ENCODE measurements at regions of chr12 and their contacts with region 1.

Region 1: GRCh38 chr12:55829967-55830600 is 697 bp upstream of the DNAJC14 start:
- DNase-seq: no peak
- H3K4me3 Mint-ChIP-seq: peak overlapping the region; percentile 95
- H3K27ac Mint-ChIP-seq: peak overlapping the region; percentile 82
- H3K4me1 Mint-ChIP-seq: peaks cover 39% of the 10 kb centered on the region
- H3K27me3 Mint-ChIP-seq: no peaks in the 10 kb centered on the region

Region 2: DNA sequence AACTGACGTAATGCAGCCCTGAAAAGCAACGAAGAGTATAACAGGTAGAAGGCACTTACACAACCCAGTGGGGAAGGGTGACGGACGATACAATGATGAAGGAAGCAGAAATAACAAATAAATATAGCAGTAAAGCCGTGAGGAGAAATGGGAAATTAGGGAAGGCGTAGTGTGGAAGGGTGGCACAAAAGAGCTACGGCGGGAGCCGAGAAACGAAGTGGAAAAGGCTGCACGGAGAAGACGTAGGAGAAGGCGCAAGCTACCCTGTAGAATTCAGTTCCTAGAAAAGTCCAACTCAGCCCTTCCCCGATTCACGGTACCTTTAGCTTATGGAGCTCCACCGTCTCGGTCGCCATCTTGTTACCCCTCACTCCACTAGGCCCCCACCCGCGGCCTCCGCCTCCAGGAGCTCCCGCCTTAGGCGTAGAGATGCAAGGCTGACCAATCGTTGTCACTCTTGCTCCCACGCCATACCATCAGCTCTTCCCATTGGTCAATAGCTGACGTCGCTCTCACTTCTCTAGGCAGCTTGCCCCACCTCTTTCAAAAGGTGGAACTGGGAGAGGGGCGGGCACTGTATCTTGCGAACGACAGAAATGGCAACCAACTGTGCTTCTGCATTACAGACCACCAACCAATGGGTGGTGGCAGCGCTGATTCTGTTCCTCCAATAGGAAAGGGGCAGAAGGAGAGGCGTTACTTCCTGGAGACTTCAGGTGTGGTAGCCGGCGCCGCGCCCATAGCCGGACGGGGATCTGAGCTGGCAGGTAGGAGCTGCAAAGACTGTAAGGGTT is 12.5 kb before region 1 on chr12 and contains the starts of genes ORMDL2 and SARNP:
- CTCF ChIA-PET with region 1: interaction called, 14 read pairs
- POLR2A ChIA-PET with region 1: interaction called, 29 read pairs
- intact Hi-C with region 1: loop called (anchors 1 kb)
- DNase-seq: peak; percentile 99
- H3K4me3 Mint-ChIP-seq: no peak within 1 kb of the TSS
- H3K27ac Mint-ChIP-seq: no peak within 1 kb of the TSS
- H3K4me1 Mint-ChIP-seq: peaks cover 49% of the 10 kb centered on the region
- H3K27me3 Mint-ChIP-seq: no peaks in the 10 kb centered on the region
- total RNA-seq, gene ORMDL2: 37.9 to 41.2 TPM
- total RNA-seq, gene SARNP: 104 to 110 TPM

Region 3: DNA sequence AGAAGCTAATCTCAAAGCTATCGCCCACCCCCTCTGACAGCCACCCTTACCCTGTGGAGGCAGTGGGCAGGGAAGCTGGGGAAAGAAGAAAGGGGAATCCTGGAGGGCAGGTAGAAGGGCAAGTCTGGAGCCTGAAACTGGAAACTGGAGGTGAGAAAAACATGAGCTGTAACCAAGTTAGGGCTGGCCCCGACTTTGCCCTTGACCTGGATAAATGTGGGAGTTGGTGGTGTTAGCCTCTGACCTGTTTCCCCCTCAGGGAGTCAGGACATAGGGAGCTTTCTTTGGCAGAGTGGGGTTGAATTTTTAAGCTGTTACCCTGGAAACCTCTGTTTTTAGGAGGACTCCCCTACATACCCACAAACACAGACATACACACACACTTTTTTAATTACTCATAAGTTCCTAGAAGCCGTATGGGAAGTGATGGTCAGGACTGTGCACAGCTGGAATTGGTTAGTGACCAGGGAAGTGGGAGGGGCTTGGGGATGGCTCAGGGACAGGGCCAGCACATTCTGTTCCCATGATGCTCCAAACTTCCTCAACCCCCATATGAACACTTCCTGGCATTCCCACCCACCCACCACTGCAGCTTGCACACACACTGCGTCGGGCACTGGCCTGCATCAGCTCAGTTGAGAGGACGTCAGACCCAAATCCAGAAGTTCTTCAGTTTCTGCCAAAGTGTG is 17.7 kb after region 1 on chr12:
- CTCF ChIA-PET with region 1: interaction called, 3 read pairs
- POLR2A ChIA-PET with region 1: interaction called, 13 read pairs
- intact Hi-C with region 1: no loop called
- DNase-seq: peak; percentile 63
- H3K4me3 Mint-ChIP-seq: no peak overlapping the region
- H3K27ac Mint-ChIP-seq: peak overlapping the region; percentile 73
- H3K4me1 Mint-ChIP-seq: peaks cover 15% of the 10 kb centered on the region
- H3K27me3 Mint-ChIP-seq: peaks cover 2% of the 10 kb centered on the region

Region 4: GRCh38 chr12:55940065-55940732 is 110.1 kb after region 1 on chr12:
- CTCF ChIA-PET with region 1: interaction called, 15 read pairs
- POLR2A ChIA-PET with region 1: no interaction called
- intact Hi-C with region 1: no loop called
- DNase-seq: peak; percentile 89
- H3K4me3 Mint-ChIP-seq: no peak overlapping the region
- H3K27ac Mint-ChIP-seq: peak overlapping the region; percentile 55
- H3K4me1 Mint-ChIP-seq: peaks cover 78% of the 10 kb centered on the region
- H3K27me3 Mint-ChIP-seq: no peaks in the 10 kb centered on the region

Region 5: GRCh38 chr12:56448860-56449621 is 619.0 kb after region 1 on chr12 and contains the start of gene TIMELESS:
- CTCF ChIA-PET with region 1: no interaction called
- POLR2A ChIA-PET with region 1: no interaction called
- intact Hi-C with region 1: loop called (anchors 5 kb)
- DNase-seq: peak; percentile 92
- H3K4me3 Mint-ChIP-seq: peak within 1 kb of the TSS; percentile 88
- H3K27ac Mint-ChIP-seq: peak within 1 kb of the TSS; percentile 93
- H3K4me1 Mint-ChIP-seq: peaks cover 18% of the 10 kb centered on the region
- H3K27me3 Mint-ChIP-seq: no peaks in the 10 kb centered on the region
- total RNA-seq, gene TIMELESS: 60.1 to 62.6 TPM

Measured in activated CD4-positive, alpha-beta memory T cell treated with anti-CD3 and anti-CD28 coated beads for 36 hours (primary cell).